Gastrocnemius medialis (tissue), 4 donors: ENCODE measurements at regions of chr12 and their contacts with region 1.

Region 1: GRCh38 chr12:56645717-56646446 is at the start of gene ATP5F1B:
- DNase-seq: peak; percentile 98 to 99
- ATAC-seq: peak; percentile 99 to 100
- H3K4me3 ChIP-seq: peak within 1 kb of the TSS; percentile 66 to 99 (median 94)
- H3K27ac ChIP-seq: peak within 1 kb of the TSS; percentile 92 to 99 (median 95)
- H3K4me1 ChIP-seq: peaks cover 27 to 32% of the 10 kb centered on the region in 2 donors
- H3K27me3 ChIP-seq: no peaks in the 10 kb centered on the region
- CTCF ChIP-seq: no peak
- POLR2A ChIP-seq: peak; percentile 96 to 99
- total RNA-seq, gene ATP5F1B: 779 to 1,310 (median 926) TPM

Region 2: DNA sequence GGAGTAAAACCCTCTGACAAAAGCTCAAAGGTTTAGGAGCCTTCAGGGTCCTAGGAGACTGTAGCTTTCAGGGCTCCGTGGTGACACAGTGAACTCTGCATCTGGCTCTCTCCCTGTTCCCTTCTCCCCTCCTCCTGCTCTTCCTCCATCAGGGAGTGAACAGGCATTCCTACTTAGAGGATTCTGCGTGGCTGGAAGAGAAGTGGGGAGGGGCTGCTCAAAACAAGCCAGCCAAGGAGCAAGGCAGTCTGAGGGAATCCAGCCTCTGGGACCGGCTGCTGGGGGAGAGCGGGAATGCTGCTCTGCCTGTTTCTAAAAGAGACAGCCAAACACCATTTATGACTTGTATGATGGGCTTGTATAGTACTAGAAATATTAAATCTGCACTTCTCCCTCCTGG is 74.8 kb before region 1 on chr12:
- in situ Hi-C with region 1: no loop called
- intact Hi-C with region 1: no loop called
- DNase-seq: no peak
- ATAC-seq: no peak
- H3K4me3 ChIP-seq: no peak overlapping the region
- H3K27ac ChIP-seq: peak overlapping the region in 2 of 4 donors; percentile 33 to 66
- H3K4me1 ChIP-seq: peaks cover 5 to 15% of the 10 kb centered on the region in 2 donors
- H3K27me3 ChIP-seq: no peaks in the 10 kb centered on the region
- CTCF ChIP-seq: no peak
- POLR2A ChIP-seq: no peak

Region 3: DNA sequence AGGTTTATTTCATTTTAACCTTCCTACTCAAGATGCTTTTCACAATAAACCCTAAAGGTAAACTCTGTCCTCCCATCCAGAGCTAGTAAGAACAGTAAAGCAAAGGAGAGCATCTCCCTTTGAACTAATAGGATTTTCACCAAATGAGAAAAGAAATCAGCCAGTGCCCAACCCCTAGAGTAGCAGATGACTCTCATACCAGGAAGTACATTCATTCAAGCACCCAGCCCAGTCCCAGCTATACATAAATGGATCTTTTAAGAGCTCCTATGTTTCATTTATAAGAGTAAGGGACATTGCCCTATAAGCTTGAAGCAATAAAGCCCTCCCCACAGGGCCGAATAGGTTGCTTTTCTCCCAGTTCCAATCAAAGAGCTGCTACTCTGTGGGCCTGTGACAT is 23.3 kb before region 1 on chr12:
- in situ Hi-C with region 1: no loop called
- intact Hi-C with region 1: no loop called
- DNase-seq: no peak
- ATAC-seq: no peak
- H3K4me3 ChIP-seq: no peak overlapping the region
- H3K27ac ChIP-seq: no peak overlapping the region
- H3K4me1 ChIP-seq: peaks cover 43 to 63% of the 10 kb centered on the region in 2 donors
- H3K27me3 ChIP-seq: no peaks in the 10 kb centered on the region
- CTCF ChIP-seq: no peak
- POLR2A ChIP-seq: no peak

Region 4: DNA sequence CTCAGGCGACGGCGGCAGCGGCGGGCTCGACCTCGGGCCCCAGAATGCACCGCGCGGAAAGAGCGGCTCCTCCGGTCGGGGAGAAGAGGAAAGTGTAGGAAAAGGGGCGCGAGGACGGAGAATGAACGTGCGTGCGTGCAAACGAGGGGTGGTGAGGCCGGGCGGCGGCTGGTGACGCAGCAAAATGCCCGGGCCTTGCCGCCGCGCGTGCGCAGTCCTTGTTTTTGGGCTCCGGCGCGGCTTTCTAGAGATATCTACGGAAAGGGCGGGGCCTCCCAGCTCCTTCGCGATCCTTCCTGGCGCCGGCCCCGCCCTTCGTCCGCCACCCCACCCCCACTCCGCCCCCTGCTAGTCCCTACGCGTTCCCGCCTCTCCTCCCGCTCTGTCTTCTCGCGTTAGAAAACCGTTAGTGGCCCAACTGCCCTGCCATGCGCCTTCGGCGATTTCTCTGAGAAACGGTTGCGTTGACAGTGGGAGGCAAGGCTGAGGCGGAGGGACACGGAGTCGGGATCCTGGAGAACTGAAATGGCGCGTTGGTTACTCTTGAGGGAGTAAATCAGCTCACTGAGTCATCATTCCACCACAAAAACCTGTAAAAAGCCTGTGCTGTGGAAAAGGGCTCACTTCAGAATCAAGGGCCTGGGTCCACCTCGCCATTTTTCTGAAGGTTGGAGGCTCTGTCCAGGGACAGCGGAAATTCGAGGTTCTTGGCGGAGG is 42.4 kb after region 1 on chr12 and contains the start of gene PTGES3:
- in situ Hi-C with region 1: no loop called
- intact Hi-C with region 1: loop called (anchors 2 kb)
- DNase-seq: peak; percentile 96 to 97
- ATAC-seq: peak; percentile 88 to 89
- H3K4me3 ChIP-seq: peak within 1 kb of the TSS; percentile 84 to 95 (median 90)
- H3K27ac ChIP-seq: peak within 1 kb of the TSS; percentile 97 to 99 (median 98)
- H3K4me1 ChIP-seq: peaks cover 33 to 41% of the 10 kb centered on the region in 2 donors
- H3K27me3 ChIP-seq: no peaks in the 10 kb centered on the region
- CTCF ChIP-seq: no peak
- POLR2A ChIP-seq: peak; percentile 96 to 97
- total RNA-seq, gene PTGES3: 57.2 to 81.4 (median 69.3) TPM